Posterior vena cava (tissue), 2 donors: ENCODE measurements at regions of chr1 and their contacts with region 1.

Region 1: DNA sequence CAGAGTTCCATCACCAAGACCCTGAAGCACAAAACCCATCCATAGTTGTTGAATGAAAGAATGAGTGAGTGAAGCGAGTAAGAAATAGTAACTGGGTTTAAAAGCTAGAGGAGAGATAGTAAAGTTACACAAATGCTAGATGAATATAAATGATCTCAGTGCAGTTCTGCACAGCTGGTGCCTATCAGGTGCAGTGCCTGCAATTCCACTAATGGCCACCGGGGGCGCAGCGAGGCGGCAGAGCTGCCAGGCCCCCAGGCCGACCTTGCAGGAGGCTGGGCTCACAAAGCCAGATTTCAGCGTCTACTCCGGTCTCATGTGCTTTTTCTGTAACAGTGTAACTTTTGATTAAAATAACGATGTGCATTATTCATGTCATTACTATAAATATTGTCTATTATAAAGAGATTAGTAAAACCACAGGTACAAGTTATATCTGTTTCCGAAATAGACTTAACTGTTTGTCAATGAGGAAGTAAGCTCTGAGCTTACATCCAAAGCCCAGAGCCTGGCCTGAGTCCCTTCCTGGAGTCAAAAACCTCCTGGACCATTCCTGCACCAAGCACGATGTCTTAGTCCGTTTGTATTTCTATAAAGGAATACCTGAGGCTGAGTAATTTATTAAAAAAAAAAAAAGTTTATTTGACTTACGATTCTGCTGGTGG is 477.6 kb downstream of the NPHP4 start:
- DNase-seq: peak; percentile 90

Region 2: DNA sequence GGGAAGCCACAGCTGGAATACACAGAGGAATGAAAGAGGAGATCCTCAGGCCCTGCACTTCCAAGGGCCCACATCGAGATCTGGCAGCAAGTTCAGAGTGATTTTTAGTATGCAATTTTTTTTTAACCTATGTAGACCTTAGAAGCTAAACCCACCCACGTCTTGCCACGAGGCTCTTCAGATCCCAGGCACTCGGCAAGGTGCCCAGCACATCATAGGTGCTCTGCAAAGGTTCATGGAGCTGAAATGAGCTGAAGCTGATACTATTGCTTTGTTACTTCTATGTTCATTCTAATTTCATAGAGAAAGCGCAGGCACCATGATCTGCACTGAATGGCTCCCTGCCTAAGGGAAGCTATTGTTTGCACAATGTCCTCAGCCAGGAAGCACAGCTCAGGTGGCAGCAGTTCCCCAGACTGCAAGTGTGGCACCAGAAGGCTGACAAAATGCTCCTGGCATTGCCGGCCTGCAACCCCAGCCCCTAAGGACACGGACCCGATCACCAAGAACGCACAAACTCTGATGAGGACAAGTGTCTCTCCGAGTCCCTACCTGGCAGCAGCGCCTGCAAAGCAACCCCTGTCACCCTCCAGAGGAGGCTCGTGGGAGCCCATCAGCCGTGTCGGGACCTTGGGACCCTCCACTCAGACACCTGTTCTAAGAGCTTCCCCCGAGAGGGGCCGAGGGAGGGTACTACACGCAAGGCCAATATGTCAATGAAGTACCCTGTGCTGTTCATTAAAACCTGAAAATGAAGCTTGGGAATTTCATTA is 213.4 kb after region 1 on chr1:
- intact Hi-C with region 1: no loop called
- DNase-seq: peak; percentile 26

Region 3: GRCh38 chr1:5745776-5746610 is 231.3 kb after region 1 on chr1:
- intact Hi-C with region 1: loop called (anchors 5 to 10 kb)
- DNase-seq: peak; percentile 86

Region 4: DNA sequence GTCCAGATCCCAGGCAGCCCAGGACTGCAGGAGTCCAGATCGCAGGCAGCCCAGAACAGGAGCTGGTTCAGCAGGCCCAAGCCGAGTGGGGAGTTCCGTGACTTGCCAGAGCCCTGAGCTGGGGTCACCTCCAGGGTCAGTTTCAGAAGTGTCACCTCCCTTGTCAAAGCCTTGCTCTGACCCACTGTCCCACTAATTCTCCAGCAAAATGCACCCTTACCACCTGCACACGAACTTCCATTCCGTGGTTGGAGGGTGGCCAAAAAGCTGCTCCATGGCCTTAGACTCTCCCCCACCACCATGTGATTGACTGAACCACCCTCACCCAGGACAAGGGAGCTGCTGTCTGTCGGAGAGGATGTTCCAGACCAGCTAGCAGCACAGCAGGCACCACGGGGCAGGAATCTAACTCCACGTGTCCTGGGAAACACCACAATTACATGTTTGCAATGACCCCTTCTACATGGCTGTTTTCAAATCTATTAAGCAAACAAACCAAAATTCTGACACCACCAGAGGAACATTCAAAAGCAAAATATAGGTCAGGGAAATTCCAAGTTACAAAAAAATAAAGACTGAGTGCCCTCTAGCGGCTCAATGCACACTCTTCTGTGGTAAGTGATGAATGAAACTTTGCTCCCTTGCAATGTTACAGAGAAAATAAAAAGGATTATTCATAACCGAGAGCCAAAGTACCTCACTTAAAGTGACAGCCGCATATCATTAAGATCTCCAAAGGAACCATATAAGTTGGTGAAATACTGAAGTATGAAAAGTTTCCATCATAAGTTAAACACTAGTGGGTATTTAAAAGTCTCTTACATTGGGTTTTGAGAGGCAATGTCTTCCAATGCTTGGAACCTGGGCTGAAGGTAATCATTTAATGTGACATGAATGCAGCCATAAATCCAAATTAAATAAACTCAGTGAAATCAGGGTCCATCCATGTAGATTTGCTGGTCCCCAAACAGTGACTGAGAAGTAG is 401.2 kb after region 1 on chr1:
- intact Hi-C with region 1: loop called in 1 of 2 experiments (anchors 10 kb)
- DNase-seq: peak; percentile 43

Region 5: DNA sequence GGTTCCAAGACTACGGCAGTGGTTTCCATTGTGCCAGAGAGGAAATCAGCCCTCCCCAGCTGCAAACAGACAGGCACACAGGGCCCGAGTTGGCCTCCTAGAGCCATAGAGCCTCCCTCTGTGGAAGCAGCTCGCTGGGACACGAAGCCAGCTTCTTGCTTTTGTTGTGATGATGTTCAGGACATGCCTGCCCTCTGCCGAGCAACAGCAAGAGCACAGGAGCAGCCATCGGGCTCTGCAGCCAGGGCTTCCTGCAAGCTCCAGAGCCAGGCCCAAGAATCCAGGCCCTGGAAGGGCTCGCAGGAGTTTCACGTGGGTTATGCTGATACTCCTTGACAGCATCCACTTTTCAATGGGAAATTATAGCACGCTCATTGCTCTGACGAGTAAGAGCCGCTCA is 459.1 kb after region 1 on chr1:
- intact Hi-C with region 1: loop called in 1 of 2 experiments (anchors 2 kb)
- DNase-seq: peak; percentile 74